Activated CD4-positive, alpha-beta T cell treated with anti-CD3 and anti-CD28 coated beads for 36 hours (primary cell): ENCODE measurements at regions of chr7 and their contacts with region 1.

Region 1: DNA sequence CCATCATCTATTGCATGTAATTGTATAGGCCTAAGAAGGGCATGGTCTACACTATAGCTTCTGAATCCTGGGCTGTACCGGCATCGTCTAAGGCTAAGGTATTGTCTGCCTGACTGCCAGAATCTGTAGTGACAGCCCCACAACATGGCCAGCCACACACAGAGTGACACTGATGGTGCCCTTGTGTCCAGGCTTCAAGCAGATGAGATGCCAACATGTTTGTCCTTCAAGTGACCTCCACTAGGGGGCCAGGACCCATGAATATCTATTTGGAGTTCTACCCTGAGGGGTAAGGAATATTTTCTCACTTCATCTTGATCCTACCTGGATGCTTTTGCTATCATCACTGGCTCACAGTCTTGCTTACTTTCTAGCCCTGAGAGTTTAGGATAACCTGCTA is 1.5 kb downstream of the CYP3A7 start:
- DNase-seq: no peak
- ATAC-seq: no peak
- H3K4me3 Mint-ChIP-seq: no peak overlapping the region
- H3K27ac Mint-ChIP-seq: no peak overlapping the region
- H3K4me1 Mint-ChIP-seq: peaks cover 10% of the 10 kb centered on the region
- H3K27me3 Mint-ChIP-seq: peaks cover 3% of the 10 kb centered on the region

Region 2: DNA sequence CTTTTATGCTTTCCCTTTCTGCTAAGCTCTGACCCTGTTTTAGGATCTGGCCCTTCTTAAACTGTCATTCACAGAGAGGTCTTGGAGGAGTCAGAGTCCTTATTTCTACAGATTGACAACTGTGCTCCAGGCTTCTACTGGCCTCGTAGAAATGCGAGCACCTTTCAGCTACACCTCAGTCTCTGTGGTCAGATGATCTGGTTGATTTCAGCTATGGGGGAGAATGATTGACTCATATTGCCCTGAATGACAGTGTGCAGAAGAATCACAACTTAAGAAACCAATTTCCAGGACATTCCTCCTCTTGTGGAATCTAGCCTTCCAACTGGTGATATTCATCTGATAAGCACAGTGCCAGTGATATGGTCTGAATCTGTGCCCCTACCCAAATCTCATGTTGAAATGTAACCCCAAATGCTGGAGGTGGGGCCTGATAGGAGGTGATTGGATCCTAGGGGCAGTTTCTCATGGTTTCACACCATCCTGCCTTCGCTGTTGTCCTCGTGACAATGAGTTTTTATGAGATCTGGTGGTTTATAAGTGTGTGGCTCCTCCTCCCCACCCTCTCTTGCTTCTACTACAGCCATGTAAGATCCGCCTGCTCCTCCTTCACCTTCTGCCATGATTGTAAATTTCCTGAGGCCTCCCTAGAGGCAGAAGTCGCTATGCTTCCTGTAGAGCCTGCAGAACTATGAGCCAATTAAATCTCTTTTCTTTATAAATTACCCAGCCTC is 15.6 kb after region 1 on chr7:
- CTCF ChIA-PET with region 1: no interaction called
- POLR2A ChIA-PET with region 1: no interaction called
- intact Hi-C with region 1: loop called in 1 of 2 experiments (anchors 2 kb)
- DNase-seq: no peak
- ATAC-seq: peak; percentile 83
- H3K4me3 Mint-ChIP-seq: no peak overlapping the region
- H3K27ac Mint-ChIP-seq: no peak overlapping the region
- H3K4me1 Mint-ChIP-seq: peaks cover 2% of the 10 kb centered on the region
- H3K27me3 Mint-ChIP-seq: peaks cover 8% of the 10 kb centered on the region